ENCODE measurements at regions of chr7 and their contacts with region 1.

Region 1: DNA sequence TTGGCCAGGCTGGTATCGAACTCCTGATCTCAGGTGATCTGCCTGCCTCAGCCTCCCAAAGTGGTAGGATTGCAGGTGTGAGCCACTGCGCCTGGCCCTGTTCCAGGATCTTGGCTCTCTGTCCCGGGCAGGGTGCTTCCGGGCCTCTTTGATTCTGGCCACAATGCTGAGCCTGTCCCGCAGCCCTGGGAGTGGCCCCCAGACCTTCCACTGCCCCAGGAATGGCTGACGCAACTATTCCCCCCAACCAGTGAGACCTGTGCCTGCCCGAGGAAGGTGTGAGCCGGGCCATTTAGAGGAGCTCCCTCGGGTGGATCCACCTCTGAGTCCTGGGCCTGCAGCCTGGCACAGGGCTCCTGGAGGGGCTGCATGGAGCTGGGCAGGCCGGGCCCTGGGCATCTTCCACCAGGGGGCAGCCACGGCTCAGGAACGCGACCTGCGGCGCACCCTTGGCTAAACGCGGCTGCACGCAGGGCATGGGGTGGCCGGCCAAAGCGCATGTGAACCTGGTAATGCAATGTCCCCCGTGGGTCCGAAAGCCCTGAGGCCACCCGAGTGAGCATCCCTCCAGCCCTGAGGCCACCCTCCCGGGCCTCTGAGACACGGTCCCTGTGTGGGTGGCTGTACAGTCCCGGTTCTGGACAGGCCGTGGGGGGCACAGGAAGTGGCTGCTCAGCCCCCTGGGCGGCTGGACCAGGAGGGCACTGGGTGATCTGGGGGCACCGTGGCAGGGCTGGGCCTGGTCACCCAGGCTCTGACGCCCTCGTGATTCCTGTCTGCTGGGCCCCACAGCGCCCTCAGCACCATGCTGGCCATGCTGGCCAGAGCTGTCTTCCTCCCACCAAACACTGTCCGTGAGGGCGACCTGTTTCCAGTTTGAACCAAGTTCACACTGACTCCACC is 24.8 kb downstream of the GRIFIN start:
- DNase-seq: peak; percentile 48
- H3K4me3 ChIP-seq: no peak overlapping the region
- H3K27ac ChIP-seq: no peak overlapping the region
- H3K4me1 ChIP-seq: no peaks in the 10 kb centered on the region
- H3K27me3 ChIP-seq: no peaks in the 10 kb centered on the region
- CTCF ChIP-seq: peak; percentile 74 to 91

Region 2: GRCh38 chr7:2471396-2471795 is 20.0 kb after region 1 on chr7:
- CTCF ChIA-PET with region 1: interaction called, 15 read pairs
- dilution Hi-C with region 1: no loop called
- in situ Hi-C with region 1: no loop called
- intact Hi-C with region 1: loop called (anchors 1 kb)
- DNase-seq: peak; percentile 60
- H3K4me3 ChIP-seq: no peak overlapping the region
- H3K27ac ChIP-seq: no peak overlapping the region
- H3K4me1 ChIP-seq: peaks cover 13% of the 10 kb centered on the region
- H3K27me3 ChIP-seq: no peaks in the 10 kb centered on the region
- CTCF ChIP-seq: no peak

Region 3: DNA sequence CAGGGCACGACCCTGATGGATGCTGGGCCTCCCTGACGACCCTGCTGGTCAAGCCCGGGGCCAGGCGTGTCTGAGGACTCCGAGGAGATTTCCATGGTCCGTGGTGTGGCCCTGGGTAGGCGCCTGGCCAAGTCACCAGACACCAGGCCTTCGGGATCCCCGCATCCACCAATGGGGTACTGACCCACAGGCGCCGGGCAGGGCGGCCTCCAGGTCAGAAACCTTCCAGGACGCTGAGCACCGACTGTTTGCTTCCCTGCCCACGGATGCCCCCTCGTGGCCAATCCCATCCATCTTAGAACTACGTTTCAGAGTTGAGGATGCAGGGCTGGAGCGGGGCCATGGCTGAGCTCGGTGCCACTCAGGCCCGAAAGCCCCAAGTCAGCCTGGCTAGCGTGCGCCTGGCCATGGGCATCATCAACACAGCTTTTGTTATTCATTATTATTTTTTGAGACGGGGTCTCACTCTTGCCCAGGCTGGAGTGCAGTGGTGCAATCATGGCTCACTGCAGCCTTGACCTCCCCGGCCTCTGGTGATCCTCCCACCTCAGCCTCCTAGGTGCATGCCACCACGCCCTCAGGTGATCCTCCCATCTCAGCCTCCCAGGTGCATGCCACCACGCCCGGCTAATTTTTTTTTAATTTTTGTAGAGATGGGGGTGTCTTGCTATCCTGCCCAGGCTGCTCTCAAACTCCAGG is 229.5 kb after region 1 on chr7:
- CTCF ChIA-PET with region 1: no interaction called
- dilution Hi-C with region 1: no loop called
- in situ Hi-C with region 1: loop called (anchors 10 to 25 kb)
- intact Hi-C with region 1: loop called (anchors 1 kb)
- DNase-seq: peak; percentile 46
- H3K4me3 ChIP-seq: no peak overlapping the region
- H3K27ac ChIP-seq: no peak overlapping the region
- H3K4me1 ChIP-seq: no peaks in the 10 kb centered on the region
- H3K27me3 ChIP-seq: peaks cover 6% of the 10 kb centered on the region
- CTCF ChIP-seq: peak; percentile 70 to 81

Region 4: DNA sequence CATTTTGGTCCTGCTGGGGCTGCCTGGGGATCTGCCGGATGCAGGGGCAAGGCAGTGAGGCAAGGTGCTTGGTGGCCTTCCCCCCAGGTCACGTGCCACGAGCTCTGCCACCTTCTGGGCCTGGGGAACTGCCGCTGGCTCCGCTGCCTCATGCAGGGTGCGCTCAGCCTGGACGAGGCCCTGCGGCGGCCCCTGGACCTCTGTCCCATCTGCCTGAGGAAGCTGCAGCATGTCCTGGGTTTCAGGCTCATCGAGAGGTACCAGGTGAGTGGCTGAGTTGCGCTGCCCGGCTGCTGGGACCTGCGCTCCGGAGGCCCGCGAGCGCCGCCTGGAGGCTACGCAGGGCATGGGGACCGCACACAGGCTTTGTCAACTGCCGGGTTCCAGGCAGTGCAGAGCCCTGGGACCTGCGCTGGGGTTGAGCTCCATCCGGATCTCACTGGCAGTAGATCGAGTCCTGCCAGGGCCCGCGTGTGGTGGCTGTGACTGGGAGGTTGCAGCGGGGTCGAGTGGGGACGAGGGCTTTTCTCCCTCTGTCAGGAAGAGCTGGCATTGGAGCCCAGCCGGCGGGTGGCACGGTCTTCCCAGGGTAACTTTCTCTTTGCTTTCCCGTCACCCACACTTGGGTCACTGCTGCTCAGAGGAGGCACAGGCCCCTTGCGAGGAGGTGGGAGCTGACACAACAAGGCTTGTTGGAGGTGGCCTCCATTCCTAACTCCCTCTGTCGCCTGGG is 258.3 kb after region 1 on chr7:
- CTCF ChIA-PET with region 1: no interaction called
- dilution Hi-C with region 1: no loop called
- in situ Hi-C with region 1: no loop called
- intact Hi-C with region 1: loop called (anchors 1 kb)
- DNase-seq: peak; percentile 48
- H3K4me3 ChIP-seq: no peak overlapping the region
- H3K27ac ChIP-seq: no peak overlapping the region
- H3K4me1 ChIP-seq: no peaks in the 10 kb centered on the region
- H3K27me3 ChIP-seq: no peaks in the 10 kb centered on the region
- CTCF ChIP-seq: peak; percentile 85 to 96

Region 5: DNA sequence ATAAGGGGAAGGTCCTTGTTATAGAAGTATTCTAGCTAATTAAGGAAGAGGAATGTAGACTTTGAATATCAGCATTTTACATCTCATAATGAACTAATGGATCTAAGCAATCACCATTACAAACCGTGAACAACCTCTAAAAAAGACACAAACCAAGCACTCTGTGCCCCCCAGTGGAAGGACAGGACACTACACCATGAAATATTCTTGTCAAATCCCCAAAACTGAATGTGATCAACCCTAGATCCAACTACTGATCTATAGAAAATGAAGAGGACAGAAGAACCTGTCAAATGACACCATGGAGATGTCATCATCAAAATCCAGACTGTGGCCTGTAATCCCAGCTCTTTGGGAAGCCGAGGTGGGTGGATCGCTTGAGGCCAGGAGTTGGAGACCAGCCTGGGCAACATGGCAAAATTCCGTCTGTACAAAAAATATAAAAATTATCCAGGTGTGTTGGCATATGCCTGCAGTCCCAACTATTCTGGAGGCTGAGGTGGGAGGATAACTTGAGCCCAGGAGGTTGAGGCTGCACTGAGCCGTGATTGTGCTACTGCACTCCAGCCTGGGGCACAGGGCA is 703.6 kb after region 1 on chr7:
- CTCF ChIA-PET with region 1: no interaction called
- dilution Hi-C with region 1: no loop called
- in situ Hi-C with region 1: no loop called
- intact Hi-C with region 1: loop called (anchors 5 kb)
- DNase-seq: peak; percentile 46
- H3K4me3 ChIP-seq: no peak overlapping the region
- H3K27ac ChIP-seq: no peak overlapping the region
- H3K4me1 ChIP-seq: no peaks in the 10 kb centered on the region
- H3K27me3 ChIP-seq: no peaks in the 10 kb centered on the region
- CTCF ChIP-seq: peak; percentile 66 to 74

Measured in mammary epithelial cell (primary cell).